ENCODE measurements at regions of chr4 and their contacts with region 1.

Region 1: DNA sequence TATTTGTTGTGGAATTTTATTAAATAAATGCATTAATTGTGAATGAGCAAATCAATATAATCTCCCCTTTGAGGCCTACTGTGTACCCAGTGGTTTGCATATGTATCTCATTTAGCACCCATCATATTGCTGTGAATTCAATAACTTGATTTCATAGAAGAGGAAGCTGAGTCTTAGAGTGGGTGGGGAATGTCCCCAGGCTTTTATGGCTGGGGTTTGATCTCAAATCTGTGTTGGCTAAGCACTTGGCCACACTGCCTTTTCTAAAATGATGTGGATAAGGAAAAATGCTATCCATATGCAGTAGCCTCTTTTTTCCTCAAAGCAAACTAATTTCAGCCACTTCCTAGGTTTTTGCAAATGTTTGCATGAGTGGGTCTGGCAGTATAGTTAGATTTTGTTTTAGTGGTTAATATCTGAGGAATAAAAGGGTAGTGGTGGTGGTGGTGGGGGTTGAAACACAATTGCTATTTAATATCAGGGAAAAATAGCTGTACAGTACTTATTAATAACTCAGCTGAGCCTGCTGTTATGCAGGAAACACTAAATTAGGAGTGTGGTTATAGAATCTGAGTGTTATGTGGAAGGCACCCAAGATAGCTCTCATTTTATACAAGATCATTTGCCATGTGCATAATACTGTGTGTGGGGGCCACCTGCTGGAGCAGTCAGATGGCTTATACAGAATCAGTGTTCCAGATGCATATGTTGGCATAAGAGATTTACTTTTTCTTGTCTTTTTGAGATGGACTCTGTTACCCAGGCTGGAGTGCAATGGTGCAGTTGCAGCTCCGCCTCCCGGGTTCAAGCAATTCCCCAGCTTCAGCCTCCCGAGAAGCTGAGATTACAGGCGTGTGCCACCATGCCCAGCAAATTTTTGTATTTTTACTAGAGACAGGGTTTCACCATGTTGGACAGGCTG is 108.0 kb downstream of the TMEM131L start:
- DNase-seq: peak; percentile 71 to 77
- H3K4me3 ChIP-seq: no peak overlapping the region
- H3K27ac ChIP-seq: peak overlapping the region in 1 of 2 donors; percentile 2
- H3K4me1 ChIP-seq: peaks cover 0 to 74% (median 27%) of the 10 kb centered on the region in 4 donors
- H3K27me3 ChIP-seq: no peaks in the 10 kb centered on the region
- CTCF ChIP-seq: peak; percentile 62 to 64

Region 2: DNA sequence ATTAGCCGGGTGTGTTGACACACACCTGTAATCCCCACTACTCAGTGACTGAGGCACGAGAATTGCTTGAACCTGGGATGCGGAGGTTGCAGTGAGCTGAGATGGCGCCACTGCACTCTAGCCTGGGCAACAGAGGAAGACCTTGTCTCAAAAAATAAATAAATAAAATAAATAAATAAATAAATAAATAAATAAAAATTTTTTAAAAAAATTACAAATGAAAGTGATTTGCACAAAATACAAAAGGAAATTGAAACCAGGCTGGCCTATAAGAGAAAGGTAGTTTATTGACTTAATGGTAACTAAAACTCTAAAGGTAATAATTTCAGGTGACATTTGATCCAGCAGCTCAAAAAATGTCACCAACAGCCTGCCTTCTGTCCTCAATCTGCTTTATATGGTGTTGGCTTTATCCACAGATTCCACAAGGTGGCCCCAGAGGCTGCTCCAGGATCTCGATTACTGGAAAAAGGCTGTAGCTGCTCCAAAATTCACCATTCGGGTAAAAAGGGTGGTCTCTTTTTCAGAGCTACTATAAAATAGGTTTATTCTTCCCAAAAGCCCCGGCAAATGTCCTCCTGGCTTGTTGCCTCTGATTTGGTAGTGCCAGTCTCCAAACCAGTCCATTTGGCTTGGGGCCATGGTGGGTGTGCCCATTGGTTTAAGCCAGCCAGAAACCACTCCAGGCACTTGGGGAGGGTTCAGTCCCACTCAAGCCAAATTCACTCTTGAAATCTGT is 431.3 kb before region 1 on chr4:
- intact Hi-C with region 1: loop called (anchors 5 kb)
- DNase-seq: peak; percentile 65 to 80
- H3K4me3 ChIP-seq: peak overlapping the region in 1 of 2 donors; percentile 21
- H3K27ac ChIP-seq: no peak overlapping the region
- H3K4me1 ChIP-seq: peaks cover 0 to 3% (median 1%) of the 10 kb centered on the region in 4 donors
- H3K27me3 ChIP-seq: no peaks in the 10 kb centered on the region
- CTCF ChIP-seq: peak; percentile 90 to 91

Region 3: DNA sequence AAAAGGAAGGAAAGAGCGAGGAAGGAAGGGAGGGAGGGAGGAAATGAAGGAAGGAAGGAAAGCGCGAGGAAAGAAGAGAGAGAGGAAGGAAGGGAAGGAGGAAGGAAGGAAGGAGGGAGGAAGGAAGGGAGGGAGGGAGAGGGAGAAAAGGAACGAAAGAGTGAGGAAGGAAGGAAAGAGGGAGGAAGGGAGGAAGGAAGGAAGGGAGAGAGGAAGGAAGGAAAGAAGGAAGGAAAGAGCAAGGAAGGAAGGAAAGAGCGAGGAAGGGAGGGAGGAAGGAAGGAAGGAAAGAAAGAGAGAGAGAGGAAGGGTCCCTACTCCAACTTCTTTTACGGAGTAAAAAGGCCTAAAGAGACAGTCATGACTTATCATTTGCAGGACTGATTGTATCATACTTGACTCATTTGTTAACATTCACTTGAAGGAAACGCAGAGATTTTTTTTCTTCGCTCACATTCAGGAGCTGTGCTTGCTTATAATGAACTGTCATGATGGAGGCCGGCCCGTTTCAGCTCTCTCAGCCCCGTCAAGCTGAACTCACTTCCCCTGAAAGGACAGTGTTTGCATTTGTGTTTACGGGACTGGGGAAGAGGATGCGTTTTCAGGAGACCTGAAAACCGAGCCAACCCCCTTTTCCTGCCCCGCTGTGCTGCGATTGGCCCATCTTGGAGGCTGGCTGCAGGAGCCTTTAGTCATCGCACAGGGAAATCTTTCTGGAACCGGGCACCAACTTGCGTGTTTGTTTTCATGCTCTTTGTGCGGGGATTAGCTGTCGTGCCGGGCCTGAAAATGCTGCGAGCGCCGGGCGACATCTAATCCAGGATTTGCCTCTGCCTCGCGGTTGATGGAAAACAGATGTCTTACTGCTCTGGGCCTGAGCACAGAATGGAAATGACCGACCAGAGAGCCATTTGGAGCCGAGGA is 352.1 kb before region 1 on chr4:
- intact Hi-C with region 1: loop called (anchors 10 kb)
- DNase-seq: peak; percentile 63 to 80
- H3K4me3 ChIP-seq: peak overlapping the region; percentile 69 to 75
- H3K27ac ChIP-seq: peak overlapping the region; percentile 85 to 96
- H3K4me1 ChIP-seq: peaks cover 0 to 20% (median 4%) of the 10 kb centered on the region in 4 donors
- H3K27me3 ChIP-seq: no peaks in the 10 kb centered on the region
- CTCF ChIP-seq: no peak

Region 4: DNA sequence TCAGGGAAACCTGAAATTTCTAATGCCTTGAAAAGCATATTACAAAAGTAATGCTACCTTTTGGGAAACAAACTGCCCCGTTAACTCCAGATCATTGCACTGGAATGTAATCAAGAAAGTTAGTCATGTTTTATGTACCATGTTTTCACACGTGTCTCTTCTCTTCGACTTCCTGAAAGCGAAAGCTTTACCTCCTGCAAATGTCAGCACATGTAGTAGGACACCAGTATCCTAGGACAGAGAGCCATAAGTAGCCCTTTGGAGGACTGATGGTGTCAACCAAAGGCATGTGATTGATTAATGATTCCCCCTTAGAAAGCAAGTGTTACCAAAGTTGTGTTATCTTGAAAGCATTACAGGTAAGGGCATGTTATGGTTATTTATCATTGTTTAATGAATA is 238.5 kb before region 1 on chr4:
- intact Hi-C with region 1: loop called (anchors 2 kb)
- DNase-seq: no peak
- H3K4me3 ChIP-seq: no peak overlapping the region
- H3K27ac ChIP-seq: no peak overlapping the region
- H3K4me1 ChIP-seq: no peaks in the 10 kb centered on the region
- H3K27me3 ChIP-seq: no peaks in the 10 kb centered on the region
- CTCF ChIP-seq: no peak

Region 5: GRCh38 chr4:153344131-153345010 is 229.8 kb before region 1 on chr4 and contains the start of gene MND1:
- intact Hi-C with region 1: loop called (anchors 2 kb)
- DNase-seq: peak; percentile 81 to 90
- H3K4me3 ChIP-seq: peak within 1 kb of the TSS; percentile 77 to 81
- H3K27ac ChIP-seq: peak within 1 kb of the TSS; percentile 50
- H3K4me1 ChIP-seq: peaks cover 0 to 30% (median 0%) of the 10 kb centered on the region in 4 donors
- H3K27me3 ChIP-seq: no peaks in the 10 kb centered on the region
- CTCF ChIP-seq: peak; percentile 83 to 99

Region 6: GRCh38 chr4:153466081-153466948 is 107.8 kb before region 1 on chr4 and contains the start of gene TMEM131L:
- intact Hi-C with region 1: loop called (anchors 5 kb)
- DNase-seq: peak; percentile 67 to 85
- H3K4me3 ChIP-seq: peak within 1 kb of the TSS; percentile 96 to 99
- H3K27ac ChIP-seq: peak within 1 kb of the TSS; percentile 92 to 95
- H3K4me1 ChIP-seq: peaks cover 0 to 55% (median 26%) of the 10 kb centered on the region in 4 donors
- H3K27me3 ChIP-seq: no peaks in the 10 kb centered on the region
- CTCF ChIP-seq: peak in 1 of 2 experiments; percentile 32